MCF 10A (cell line): ENCODE measurements at regions of chr6 and their contacts with region 1.

Region 1: DNA sequence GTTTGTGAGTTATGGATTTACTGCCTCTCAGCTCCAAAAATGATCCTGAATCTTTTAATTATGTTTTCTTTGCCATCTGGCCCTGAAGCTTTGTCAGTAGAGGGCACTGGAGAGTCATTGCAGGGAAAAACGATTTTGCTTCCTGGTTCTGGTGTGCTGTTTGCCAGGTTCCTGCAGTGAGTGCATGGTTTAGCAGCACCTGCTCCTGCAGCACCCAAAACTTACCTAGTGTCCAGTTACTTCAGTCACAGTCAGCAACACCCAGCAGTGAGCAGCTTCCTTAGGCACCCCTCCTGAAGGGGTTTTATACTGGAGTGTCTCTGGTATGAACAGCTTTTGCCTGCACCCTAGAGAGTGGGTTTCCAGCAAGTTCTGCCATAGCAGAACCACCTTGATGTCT is 6.0 kb upstream of the TRIM26 start:
- DNase-seq: peak; percentile 72
- H3K4me3 Mint-ChIP-seq: no peak overlapping the region
- H3K27ac Mint-ChIP-seq: no peak overlapping the region
- H3K4me1 Mint-ChIP-seq: peaks cover 8% of the 10 kb centered on the region
- H3K27me3 Mint-ChIP-seq: no peaks in the 10 kb centered on the region
- CTCF ChIP-seq: peak; percentile 82

Region 2: GRCh38 chr6:29995340-29995777 is 223.9 kb before region 1 on chr6:
- CTCF ChIA-PET with region 1: no interaction called
- POLR2A ChIA-PET with region 1: no interaction called
- intact Hi-C with region 1: no loop called
- DNase-seq: peak; percentile 91
- H3K4me3 Mint-ChIP-seq: no peak overlapping the region
- H3K27ac Mint-ChIP-seq: no peak overlapping the region
- H3K4me1 Mint-ChIP-seq: peaks cover 45% of the 10 kb centered on the region
- H3K27me3 Mint-ChIP-seq: peaks cover 10% of the 10 kb centered on the region
- CTCF ChIP-seq: no peak

Region 3: DNA sequence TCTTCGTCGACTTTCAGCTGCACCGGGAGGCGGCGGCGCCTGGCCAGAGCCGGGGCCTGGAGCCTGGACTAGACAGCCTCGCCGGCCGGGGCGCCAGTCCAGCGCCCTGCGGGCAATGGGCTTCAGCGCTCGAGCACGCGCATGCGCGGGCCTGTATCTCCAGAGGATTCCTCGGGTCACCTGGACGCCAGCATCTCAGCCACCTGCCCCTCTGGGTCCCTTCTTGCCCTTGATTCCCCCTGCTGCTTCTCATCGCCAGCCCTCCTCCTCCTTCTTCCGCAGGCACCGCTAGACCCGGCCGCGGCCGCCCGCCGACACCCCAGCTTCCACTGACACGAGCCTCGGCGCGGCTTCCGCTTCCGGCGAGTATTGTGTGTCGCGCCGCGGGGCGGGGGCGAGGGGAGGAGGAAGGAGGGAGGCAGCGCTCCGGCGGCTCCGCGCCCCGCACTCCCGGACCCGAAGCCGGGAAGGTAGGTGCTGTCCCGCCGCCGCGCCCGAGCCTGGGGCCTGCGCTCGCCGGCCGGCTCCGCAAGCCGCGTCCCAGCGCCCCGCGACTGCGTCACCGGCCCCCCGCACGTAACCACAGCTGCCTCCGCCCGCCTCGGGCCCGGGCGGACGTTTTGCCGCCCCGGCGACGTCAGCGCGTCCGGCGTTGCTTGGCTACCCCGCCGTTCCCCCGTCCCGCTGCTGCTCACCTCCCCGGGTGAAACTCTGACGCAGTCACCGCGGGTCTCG is 107.4 kb after region 1 on chr6 and contains the start of gene TRIM39:
- CTCF ChIA-PET with region 1: interaction called, 5 read pairs
- POLR2A ChIA-PET with region 1: interaction called, 59 read pairs
- intact Hi-C with region 1: loop called (anchors 2 kb)
- DNase-seq: peak; percentile 81
- H3K4me3 Mint-ChIP-seq: peak within 1 kb of the TSS; percentile 90
- H3K27ac Mint-ChIP-seq: peak within 1 kb of the TSS; percentile 98
- H3K4me1 Mint-ChIP-seq: peaks cover 30% of the 10 kb centered on the region
- H3K27me3 Mint-ChIP-seq: no peaks in the 10 kb centered on the region
- CTCF ChIP-seq: no peak
- total RNA-seq, gene TRIM39: 14.7 and 18.6 TPM in 2 replicates

Region 4: DNA sequence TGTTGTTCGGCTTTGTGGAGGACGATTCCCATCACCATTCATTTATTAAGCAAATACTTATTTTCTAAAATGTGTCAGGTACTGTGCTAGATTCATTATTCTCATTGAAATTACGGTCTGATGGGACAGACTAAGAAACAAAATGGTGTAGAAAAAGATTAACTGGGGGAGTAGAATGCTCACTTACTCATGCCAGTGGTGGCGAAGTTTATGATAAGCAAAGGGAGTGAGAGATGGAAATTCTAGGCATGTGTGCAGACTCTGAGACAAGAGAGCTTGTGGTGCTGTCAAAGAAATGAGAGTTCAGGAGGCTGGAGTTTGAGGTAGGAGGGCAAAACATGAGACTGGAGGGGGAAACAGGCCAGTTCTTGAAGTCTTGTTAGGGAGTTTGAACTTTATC is 126.6 kb after region 1 on chr6:
- CTCF ChIA-PET with region 1: interaction called, 6 read pairs
- POLR2A ChIA-PET with region 1: interaction called, 4 read pairs
- intact Hi-C with region 1: loop called (anchors 2 kb)
- DNase-seq: no peak
- H3K4me3 Mint-ChIP-seq: peak overlapping the region; percentile 78
- H3K27ac Mint-ChIP-seq: peak overlapping the region; percentile 39
- H3K4me1 Mint-ChIP-seq: peaks cover 12% of the 10 kb centered on the region
- H3K27me3 Mint-ChIP-seq: no peaks in the 10 kb centered on the region
- CTCF ChIP-seq: no peak

Region 5: DNA sequence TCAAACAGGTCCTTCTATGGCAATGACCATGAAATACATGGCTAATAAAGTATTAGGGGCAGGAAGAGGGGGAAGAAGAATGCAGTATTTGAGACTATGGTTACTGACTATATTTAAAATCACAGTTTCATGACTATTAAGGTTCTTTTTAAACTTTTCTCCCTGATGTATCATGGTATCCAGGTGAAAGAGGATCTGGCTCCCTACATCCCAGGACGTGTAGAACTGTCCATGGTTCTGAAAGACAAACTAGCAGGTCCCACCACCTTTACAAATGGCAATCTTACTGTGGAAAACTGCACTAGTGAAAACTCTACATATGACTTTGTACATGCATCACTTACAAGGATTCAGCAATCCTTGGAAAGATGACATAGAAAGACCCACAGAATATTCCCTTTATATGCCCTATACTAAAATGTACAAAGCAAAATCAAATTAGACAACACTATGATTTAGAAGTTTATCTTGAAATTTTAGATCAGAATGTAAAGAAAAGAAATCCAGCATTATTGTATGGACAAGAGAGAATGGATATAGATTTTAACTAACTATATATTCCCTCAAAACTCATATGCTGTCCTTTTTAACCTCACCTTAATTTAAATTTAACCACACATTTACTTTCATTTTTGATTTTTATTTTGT is 159.2 kb after region 1 on chr6:
- CTCF ChIA-PET with region 1: no interaction called
- POLR2A ChIA-PET with region 1: no interaction called
- intact Hi-C with region 1: no loop called
- DNase-seq: peak; percentile 64
- H3K4me3 Mint-ChIP-seq: no peak overlapping the region
- H3K27ac Mint-ChIP-seq: no peak overlapping the region
- H3K4me1 Mint-ChIP-seq: no peaks in the 10 kb centered on the region
- H3K27me3 Mint-ChIP-seq: peaks cover 91% of the 10 kb centered on the region
- CTCF ChIP-seq: no peak

Region 6: GRCh38 chr6:30396833-30397479 is 177.7 kb after region 1 on chr6:
- CTCF ChIA-PET with region 1: interaction called, 6 read pairs
- POLR2A ChIA-PET with region 1: interaction called, 9 read pairs
- intact Hi-C with region 1: loop called (anchors 1 kb)
- DNase-seq: peak; percentile 74
- H3K4me3 Mint-ChIP-seq: no peak overlapping the region
- H3K27ac Mint-ChIP-seq: no peak overlapping the region
- H3K4me1 Mint-ChIP-seq: no peaks in the 10 kb centered on the region
- H3K27me3 Mint-ChIP-seq: peaks cover 34% of the 10 kb centered on the region
- CTCF ChIP-seq: peak; percentile 61

Region 7: GRCh38 chr6:30411515-30412207 is 192.4 kb after region 1 on chr6:
- CTCF ChIA-PET with region 1: interaction called, 3 read pairs
- POLR2A ChIA-PET with region 1: no interaction called
- intact Hi-C with region 1: loop called (anchors 5 kb)
- DNase-seq: peak; percentile 60
- H3K4me3 Mint-ChIP-seq: no peak overlapping the region
- H3K27ac Mint-ChIP-seq: no peak overlapping the region
- H3K4me1 Mint-ChIP-seq: no peaks in the 10 kb centered on the region
- H3K27me3 Mint-ChIP-seq: peaks cover 88% of the 10 kb centered on the region
- CTCF ChIP-seq: peak; percentile 79